Mammary epithelial cell (primary cell): ENCODE measurements at regions of chr1 and their contacts with region 1.

Region 1: DNA sequence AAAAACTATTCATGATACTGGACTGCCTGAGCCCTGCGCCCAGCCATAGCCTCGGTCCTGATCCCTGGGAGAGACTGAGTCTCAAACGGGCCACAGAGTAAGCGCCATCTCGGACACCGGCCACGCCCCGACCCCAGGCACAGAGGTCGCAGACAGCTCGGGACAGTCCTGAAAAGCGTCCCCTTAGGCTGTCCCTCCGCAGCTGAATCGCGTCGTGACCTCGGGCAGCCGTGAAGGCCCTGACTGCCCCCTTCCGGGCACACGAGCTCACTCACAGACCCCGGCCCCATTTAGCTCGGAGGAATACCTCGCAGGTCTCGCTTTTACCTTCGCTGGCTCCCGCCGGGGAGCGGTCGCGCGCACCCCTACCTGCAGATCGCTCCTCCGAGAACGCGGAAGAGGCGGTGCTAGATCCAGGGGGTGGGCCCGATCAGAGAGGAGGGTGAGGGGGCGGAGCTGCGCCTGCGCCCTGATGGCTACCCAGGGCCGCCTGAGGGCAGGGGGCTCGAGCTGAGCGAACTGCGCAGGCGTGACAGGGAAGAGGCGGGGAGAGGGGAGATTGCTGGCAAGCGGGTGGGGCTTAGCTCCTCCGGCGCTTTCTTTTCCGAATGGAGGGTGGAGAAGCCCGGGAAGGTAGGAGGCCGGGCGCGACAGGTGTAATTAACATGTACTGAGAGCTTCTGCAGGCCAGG is at the start of gene MKNK1:
- DNase-seq: peak; percentile 93
- H3K4me3 ChIP-seq: peak within 1 kb of the TSS; percentile 81 to 98 (median 98)
- H3K27ac ChIP-seq: peak within 1 kb of the TSS; percentile 49
- H3K4me1 ChIP-seq: peaks cover 25% of the 10 kb centered on the region
- H3K27me3 ChIP-seq: no peaks in the 10 kb centered on the region
- CTCF ChIP-seq: peak in 1 of 2 donors; percentile 17
- total RNA-seq, gene MKNK1: 21.7 to 50.0 TPM

Region 2: DNA sequence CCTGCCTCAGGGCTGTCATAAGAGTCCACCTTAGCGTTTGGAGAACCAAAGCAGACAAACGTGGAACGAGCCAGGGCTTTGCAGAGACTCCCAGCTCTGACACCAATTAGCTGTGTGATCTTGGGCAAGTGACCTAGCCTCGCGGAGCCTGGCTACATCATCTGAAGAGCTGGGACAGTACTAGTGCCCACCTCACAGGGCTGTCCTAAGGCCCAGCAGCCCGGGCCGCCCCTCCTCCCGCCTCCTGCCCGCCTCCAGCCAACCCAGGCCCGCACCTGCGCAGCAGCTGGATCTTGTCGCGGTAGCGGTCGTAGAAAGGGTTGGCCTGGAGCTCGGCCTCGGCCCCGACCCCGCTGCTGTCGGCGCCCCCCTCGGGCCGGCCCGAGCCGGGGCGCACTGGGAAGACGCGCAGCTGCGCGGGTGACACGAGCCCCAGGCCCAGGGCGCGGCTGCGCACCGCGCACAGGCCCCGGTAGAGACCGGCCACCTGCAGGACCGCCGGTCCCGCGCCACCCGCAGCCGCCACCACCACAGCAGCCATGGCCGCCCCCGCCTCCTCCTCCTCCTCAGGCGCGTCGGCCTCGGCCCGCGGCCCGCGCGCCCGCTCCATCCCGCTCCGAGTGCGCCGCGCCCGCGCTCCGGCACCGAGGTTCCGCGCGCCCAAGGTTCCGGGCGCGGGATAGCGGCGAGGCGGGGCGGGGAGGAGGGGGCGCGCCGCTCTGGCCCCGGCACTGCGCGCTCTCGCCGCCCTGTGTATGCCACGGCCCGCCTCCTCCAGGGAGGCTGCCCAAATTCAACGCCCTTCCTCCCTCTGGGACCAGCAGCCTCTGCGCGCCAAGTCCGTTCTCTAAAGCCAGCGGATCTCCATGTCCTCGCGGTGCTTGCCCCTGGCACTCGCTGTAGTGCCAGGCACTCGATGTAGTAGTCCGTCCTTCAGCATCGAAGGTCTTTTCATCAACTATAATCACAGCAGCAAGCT is 64.1 kb after region 1 on chr1 and contains the start of gene ATPAF1:
- CTCF ChIA-PET with region 1: no interaction called
- dilution Hi-C with region 1: no loop called
- in situ Hi-C with region 1: no loop called
- intact Hi-C with region 1: loop called (anchors 1 kb)
- DNase-seq: peak; percentile 57
- H3K4me3 ChIP-seq: peak within 1 kb of the TSS; percentile 34 to 57 (median 50)
- H3K27ac ChIP-seq: no peak within 1 kb of the TSS
- H3K4me1 ChIP-seq: peaks cover 15% of the 10 kb centered on the region
- H3K27me3 ChIP-seq: no peaks in the 10 kb centered on the region
- CTCF ChIP-seq: no peak
- total RNA-seq, gene ATPAF1: 24.8 to 36.5 TPM